ENCODE measurements at regions of chr1 and their contacts with region 1.

Region 1: DNA sequence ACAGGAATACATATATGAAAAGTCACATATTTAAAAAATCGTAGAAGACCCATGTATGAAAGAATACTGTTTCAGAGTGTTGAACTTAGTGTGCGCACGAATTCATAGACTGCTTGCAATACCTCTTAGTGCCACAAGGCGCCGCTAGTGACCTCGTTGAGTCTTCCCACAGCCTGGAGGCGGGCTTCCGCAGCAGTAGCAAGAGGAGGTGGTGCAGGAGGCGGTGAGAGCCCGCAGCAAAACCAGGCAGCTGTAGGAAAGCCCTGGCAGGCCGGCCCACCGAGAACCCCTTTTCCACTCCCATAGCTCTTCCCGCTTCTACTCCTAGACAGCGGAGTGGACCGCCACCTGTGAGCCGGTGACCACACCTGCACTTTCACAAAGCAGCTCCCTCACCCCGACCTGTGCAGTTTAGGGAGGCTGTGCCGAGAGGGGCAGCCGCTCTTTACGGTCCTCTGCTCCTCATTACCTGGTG is 23.5 kb downstream of the MTARC1 start:
- DNase-seq: peak; percentile 79
- CTCF ChIP-seq: peak; percentile 88

Region 2: DNA sequence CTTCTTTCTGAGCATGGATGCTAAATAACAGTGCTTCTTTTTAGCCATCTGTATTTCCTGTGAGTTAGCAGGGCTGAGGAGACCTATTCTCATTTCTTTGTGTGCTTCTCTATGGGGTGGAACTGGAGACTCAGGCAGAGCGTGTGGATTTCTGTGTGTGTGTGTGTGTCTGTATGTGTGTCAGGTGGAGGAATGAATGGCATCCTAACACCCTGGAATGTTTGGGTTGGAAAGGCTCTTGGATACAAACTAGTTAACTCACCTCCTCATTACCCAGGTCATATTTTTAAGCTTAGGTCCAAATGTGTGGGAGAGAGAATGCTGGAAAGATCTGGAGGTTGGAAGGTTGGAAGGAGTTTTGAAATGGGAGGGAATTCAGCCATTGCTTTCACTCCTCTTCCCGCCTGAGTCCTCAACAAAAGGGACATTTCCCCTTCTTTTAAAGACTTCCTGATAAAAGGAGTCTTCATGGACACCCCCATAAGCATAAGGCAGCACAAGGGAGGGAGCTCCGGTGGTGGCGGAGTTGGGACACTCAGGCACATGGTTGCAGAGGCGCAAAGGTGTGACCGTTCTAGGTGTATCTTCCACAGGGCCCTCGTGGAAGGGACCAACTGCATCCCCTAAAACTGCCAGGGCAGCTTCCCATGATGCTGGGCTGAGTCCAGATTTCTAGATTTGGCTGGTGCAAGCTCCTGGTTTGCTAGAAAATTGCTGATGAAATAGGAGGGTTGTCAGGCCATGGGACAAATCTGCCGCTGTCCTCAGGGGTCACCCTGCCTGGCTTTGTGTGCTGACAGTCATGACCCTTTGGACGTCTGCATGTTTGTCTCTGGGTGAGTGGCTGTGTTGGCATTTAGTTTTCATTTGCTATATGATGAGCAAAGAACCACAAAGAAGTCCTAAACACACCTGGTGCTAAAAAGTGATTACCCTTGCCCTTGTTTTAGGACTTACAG is 14.1 kb after region 1 on chr1:
- CTCF ChIA-PET with region 1: interaction called, 11 read pairs
- POLR2A ChIA-PET with region 1: no interaction called
- DNase-seq: no peak
- CTCF ChIP-seq: no peak

Region 3: DNA sequence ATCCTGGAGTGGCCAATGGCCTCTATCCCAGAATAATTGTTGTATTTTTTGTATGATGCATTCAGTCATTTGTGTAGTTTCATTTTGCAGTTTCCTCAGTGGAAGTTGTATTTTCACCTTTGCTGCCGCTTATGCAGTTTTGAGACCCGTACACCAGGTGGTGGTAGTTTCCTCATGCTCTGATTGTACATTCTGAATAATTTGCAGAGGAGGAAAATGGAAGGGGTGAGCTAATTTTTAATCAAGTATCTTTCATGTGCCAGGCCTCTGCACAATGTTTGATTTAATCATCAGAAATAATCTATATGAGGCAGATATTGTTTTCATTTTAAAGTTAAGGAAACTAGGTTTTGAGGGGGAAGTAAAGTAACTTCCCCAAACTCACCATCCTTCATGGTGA is 98.5 kb after region 1 on chr1:
- CTCF ChIA-PET with region 1: no interaction called
- POLR2A ChIA-PET with region 1: no interaction called
- DNase-seq: peak; percentile 15
- CTCF ChIP-seq: peak; percentile 20